Cardiac septum (tissue), 1 donor: ENCODE measurements at regions of chr6 and their contacts with region 1.

Region 1: DNA sequence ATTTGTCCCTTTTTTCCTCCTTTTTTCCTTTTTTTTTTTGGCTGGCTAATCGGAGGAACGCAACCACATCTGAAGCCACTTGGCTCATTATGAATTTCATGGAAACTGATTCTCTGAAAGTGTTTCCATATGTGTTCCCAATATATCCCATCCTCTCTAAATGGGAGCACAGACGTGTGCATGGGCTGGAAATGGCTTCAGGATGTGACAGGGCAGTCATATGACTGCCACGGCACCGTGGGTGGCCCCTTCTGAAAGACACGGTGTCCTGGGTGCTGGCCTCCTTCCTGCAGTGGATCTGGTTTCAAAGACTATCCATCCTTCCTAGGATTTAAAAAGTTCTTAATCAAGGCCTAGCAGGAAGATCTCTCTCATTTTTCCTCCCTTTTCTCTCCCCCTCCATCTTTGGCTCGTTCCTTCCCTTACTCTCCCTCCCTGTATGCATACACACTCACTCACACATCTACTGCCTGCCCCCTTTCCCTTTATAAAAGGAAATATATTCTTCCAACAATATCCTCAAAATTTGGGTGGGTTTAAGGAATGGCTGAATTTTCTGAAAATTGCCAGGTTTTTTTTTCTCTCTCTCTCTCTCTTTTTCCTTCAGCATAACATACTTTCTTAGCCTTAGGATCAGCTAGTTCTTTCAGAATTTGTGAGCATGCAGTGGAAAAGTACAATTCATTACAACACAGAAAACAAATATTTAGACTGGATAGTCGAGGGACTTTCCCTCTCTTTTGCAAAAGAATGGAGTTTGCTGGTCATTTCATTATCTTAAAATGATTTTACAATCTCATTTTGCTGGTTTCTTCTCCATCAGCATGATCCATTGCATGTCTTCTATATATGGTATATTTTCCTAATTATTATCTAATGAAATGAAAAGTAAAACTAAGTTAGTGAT is 161.2 kb upstream of the SUPT3H start:
- DNase-seq: no peak

Region 2: GRCh38 chr6:45486736-45487135 is 52.2 kb before region 1 on chr6:
- intact Hi-C with region 1: loop called (anchors 5 kb)
- DNase-seq: no peak

Region 3: GRCh38 chr6:45595010-45595851 is 56.3 kb after region 1 on chr6:
- intact Hi-C with region 1: loop called (anchors 2 kb)
- DNase-seq: no peak

Region 4: DNA sequence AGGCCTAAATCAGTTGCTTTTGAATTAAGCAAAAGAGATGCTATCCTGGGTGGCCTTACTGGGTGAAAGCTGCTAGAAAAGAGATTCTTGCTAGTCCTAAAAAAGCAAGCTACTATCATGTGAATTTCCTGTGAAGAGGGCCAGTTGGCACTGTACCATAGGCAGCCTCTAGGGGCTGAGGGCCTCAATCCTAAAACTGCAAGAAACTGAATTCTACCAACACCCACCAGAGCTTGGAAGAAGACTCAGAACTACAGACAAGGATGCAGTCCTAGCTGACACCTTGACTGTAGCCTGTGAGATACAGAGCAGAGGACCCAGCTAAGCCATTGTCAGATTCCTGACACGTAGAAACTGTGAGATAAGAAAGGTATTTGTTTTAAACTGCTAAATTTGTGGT is 452.3 kb after region 1 on chr6:
- intact Hi-C with region 1: no loop called
- DNase-seq: no peak